ENCODE measurements at regions of chr1 and their contacts with region 1.

Region 1: GRCh38 chr1:221777431-221778072 is 35.7 kb upstream of the DUSP10 start:
- DNase-seq: no peak
- ATAC-seq: peak; percentile 65
- H3K4me3 Mint-ChIP-seq: peak overlapping the region; percentile 75
- H3K27ac Mint-ChIP-seq: peak overlapping the region; percentile 95
- H3K4me1 Mint-ChIP-seq: peaks cover 78% of the 10 kb centered on the region
- H3K27me3 Mint-ChIP-seq: no peaks in the 10 kb centered on the region
- CTCF ChIP-seq: peak; percentile 34

Region 2: DNA sequence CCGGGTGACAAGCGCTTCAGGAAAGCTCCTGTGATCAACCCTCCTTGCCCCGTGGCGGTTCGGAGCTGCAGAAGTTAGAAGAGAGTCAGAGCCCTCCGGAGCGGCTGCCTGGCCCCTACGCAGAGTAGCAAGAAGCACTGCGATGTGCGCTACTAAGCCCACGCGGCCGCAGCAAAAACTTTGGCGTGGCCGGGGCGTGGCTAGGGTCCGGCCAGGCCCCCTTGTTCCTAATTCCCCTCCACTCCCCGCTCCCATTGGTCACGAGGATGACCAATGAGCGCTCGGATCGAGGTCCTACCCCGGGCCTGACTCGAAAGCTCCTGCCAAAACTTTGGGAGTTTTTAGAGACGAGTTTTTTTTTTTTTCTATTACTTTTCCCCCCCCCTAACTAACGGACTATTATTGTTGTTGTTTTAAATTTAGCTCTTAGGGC is 898.5 kb before region 1 on chr1 and contains the start of gene HLX:
- CTCF ChIA-PET with region 1: no interaction called
- POLR2A ChIA-PET with region 1: interaction called, 3 read pairs
- intact Hi-C with region 1: loop called (anchors 5 kb)
- DNase-seq: peak; percentile 75
- ATAC-seq: peak; percentile 80
- H3K4me3 Mint-ChIP-seq: peak within 1 kb of the TSS; percentile 94
- H3K27ac Mint-ChIP-seq: peak within 1 kb of the TSS; percentile 93
- H3K4me1 Mint-ChIP-seq: peaks cover 50% of the 10 kb centered on the region
- H3K27me3 Mint-ChIP-seq: peaks cover 2% of the 10 kb centered on the region
- CTCF ChIP-seq: no peak
- total RNA-seq, gene HLX: 3.2 and 4.6 TPM in 2 replicates

Region 3: GRCh38 chr1:221478050-221478949 is 299.3 kb before region 1 on chr1:
- CTCF ChIA-PET with region 1: interaction called, 5 read pairs
- POLR2A ChIA-PET with region 1: no interaction called
- intact Hi-C with region 1: loop called (anchors 1 kb)
- DNase-seq: peak; percentile 27
- ATAC-seq: peak; percentile 93
- H3K4me3 Mint-ChIP-seq: no peak overlapping the region
- H3K27ac Mint-ChIP-seq: no peak overlapping the region
- H3K4me1 Mint-ChIP-seq: peaks cover 4% of the 10 kb centered on the region
- H3K27me3 Mint-ChIP-seq: peaks cover 4% of the 10 kb centered on the region
- CTCF ChIP-seq: no peak

Region 4: DNA sequence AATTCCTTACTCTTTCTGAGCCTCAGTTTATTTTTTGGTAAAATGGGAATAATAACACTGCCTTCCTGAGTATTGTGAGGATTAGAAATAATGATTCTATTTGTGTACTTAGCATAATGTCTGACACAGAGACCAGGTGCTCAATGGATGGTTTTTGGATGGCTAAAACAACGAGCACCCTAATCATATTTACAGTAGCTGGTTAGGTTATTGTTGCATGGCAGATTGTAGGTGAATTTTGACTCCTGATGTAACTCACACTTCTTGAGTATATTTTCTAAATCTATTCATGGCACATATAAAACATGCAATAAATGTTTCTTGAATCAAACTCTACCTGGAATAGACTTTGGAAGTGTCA is 23.7 kb before region 1 on chr1:
- CTCF ChIA-PET with region 1: interaction called, 8 read pairs
- POLR2A ChIA-PET with region 1: interaction called, 55 read pairs
- intact Hi-C with region 1: loop called (anchors 1 kb)
- DNase-seq: no peak
- ATAC-seq: peak; percentile 4
- H3K4me3 Mint-ChIP-seq: peak overlapping the region; percentile 71
- H3K27ac Mint-ChIP-seq: peak overlapping the region; percentile 89
- H3K4me1 Mint-ChIP-seq: peaks cover 50% of the 10 kb centered on the region
- H3K27me3 Mint-ChIP-seq: no peaks in the 10 kb centered on the region
- CTCF ChIP-seq: no peak

Region 5: DNA sequence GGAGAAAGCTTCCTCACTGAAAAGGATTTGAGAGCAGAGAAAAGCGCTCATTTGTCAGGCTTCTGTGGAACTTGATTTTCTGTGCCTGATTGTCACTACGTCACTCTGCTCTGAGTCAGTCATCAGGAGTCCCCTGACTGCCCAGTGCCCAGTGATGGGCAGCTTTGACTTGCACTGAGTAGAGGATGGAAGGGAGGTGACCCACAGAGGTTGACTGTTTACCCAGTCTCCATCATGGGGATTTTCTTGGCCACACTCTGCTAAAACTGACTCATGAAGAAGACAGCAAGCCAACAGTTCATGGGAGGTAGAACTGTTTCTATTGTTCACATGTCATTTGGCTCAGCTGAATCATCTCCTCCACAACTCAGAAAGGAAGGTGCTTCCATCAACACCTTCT is 46.5 kb after region 1 on chr1:
- CTCF ChIA-PET with region 1: interaction called, 3 read pairs
- POLR2A ChIA-PET with region 1: interaction called, 14 read pairs
- intact Hi-C with region 1: loop called (anchors 1 kb)
- DNase-seq: no peak
- ATAC-seq: peak; percentile 40
- H3K4me3 Mint-ChIP-seq: peak overlapping the region; percentile 58
- H3K27ac Mint-ChIP-seq: peak overlapping the region; percentile 85
- H3K4me1 Mint-ChIP-seq: peaks cover 67% of the 10 kb centered on the region
- H3K27me3 Mint-ChIP-seq: no peaks in the 10 kb centered on the region
- CTCF ChIP-seq: no peak

Region 6: DNA sequence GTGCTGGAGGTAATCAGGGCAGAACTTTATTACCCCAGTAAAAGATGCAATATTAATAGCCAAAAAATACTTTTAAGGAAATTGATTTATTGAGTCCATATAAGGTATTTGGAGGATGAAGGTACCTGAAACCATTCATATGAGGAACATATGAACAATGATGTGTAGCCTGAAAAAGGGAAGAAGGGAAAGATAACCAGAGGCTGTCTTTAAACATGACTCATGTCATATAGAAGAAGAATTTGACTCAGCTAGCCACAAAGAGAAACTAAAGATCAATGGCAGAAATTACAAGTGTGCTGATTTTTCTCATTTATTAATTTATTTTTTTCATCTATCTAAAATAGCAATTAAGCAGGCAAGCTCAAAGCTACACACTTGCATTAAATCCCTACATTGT is 100.6 kb after region 1 on chr1:
- CTCF ChIA-PET with region 1: no interaction called
- POLR2A ChIA-PET with region 1: interaction called, 7 read pairs
- intact Hi-C with region 1: loop called (anchors 1 kb)
- DNase-seq: no peak
- ATAC-seq: peak; percentile 36
- H3K4me3 Mint-ChIP-seq: no peak overlapping the region
- H3K27ac Mint-ChIP-seq: no peak overlapping the region
- H3K4me1 Mint-ChIP-seq: peaks cover 48% of the 10 kb centered on the region
- H3K27me3 Mint-ChIP-seq: no peaks in the 10 kb centered on the region
- CTCF ChIP-seq: no peak

Measured in activated B cell treated with CpG ODN at 0.5 μM for 24 hours (primary cell).